MCF 10A (cell line): ENCODE measurements at regions of chr4 and their contacts with region 1.

Region 1: DNA sequence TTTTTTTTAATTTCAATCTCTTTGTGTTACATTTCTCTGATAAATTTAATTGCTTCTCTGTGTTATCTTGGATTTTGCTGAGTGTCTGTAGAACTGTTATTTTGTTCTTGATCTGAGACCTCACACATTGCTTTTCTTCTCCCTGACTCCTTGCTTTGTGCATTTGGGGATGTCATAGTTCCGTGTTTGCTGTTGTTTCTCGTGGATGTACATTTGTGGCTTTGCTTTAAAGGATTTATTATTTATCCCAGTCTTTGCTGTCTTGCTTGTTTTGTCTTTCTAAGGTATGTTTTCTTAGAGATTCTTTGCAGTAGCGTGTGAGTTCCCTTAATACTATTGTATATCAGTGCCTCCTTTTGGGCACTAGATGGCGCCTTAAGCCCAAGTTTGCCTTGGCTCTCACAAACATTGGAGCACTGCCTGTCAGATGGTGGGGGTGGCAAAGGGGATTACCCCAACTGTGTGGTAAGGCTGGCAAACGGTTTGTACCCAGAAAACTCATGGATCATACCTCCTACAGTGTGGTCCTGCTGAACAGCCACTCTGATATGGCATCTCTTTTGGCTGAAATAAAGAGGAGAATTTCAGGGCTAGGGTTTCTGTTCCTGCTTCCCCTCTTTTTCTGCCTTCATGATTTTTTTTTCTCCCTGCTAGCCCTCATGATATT is 96.4 kb downstream of the PGRMC2 start:
- DNase-seq: peak; percentile 81
- H3K4me3 Mint-ChIP-seq: no peak overlapping the region
- H3K27ac Mint-ChIP-seq: no peak overlapping the region
- H3K4me1 Mint-ChIP-seq: peaks cover 6% of the 10 kb centered on the region
- H3K27me3 Mint-ChIP-seq: no peaks in the 10 kb centered on the region
- CTCF ChIP-seq: peak; percentile 77

Region 2: GRCh38 chr4:128168701-128169100 is 22.5 kb before region 1 on chr4:
- CTCF ChIA-PET with region 1: interaction called, 11 read pairs
- POLR2A ChIA-PET with region 1: no interaction called
- intact Hi-C with region 1: no loop called
- DNase-seq: no peak
- H3K4me3 Mint-ChIP-seq: no peak overlapping the region
- H3K27ac Mint-ChIP-seq: no peak overlapping the region
- H3K4me1 Mint-ChIP-seq: no peaks in the 10 kb centered on the region
- H3K27me3 Mint-ChIP-seq: no peaks in the 10 kb centered on the region
- CTCF ChIP-seq: no peak

Region 3: GRCh38 chr4:128204901-128205300 is 13.7 kb after region 1 on chr4:
- CTCF ChIA-PET with region 1: interaction called, 11 read pairs
- POLR2A ChIA-PET with region 1: no interaction called
- intact Hi-C with region 1: no loop called
- DNase-seq: no peak
- H3K4me3 Mint-ChIP-seq: no peak overlapping the region
- H3K27ac Mint-ChIP-seq: no peak overlapping the region
- H3K4me1 Mint-ChIP-seq: no peaks in the 10 kb centered on the region
- H3K27me3 Mint-ChIP-seq: no peaks in the 10 kb centered on the region
- CTCF ChIP-seq: no peak

Region 4: DNA sequence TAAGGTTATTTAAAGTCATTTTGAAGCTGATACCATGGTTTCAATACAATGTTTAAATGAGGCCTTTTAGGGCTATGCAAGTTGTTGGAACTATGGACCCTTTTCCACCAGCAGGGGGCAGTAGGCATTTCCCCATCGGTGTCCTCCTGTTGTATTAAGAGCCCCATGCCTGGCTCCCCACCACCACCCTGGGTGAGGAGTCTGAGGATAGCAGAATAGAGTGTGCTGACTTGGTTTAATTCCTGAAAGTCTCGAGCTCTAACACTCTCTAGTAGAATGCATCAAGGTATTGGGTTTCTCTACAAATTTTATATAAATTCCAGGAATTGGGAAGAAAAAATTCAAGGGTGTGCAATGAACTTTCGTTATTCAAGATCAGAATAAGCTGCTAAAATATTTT is 383.5 kb after region 1 on chr4:
- CTCF ChIA-PET with region 1: interaction called, 4 read pairs
- POLR2A ChIA-PET with region 1: no interaction called
- intact Hi-C with region 1: loop called (anchors 2 kb)
- DNase-seq: peak; percentile 79
- H3K4me3 Mint-ChIP-seq: no peak overlapping the region
- H3K27ac Mint-ChIP-seq: no peak overlapping the region
- H3K4me1 Mint-ChIP-seq: peaks cover 32% of the 10 kb centered on the region
- H3K27me3 Mint-ChIP-seq: no peaks in the 10 kb centered on the region
- CTCF ChIP-seq: peak; percentile 61

Region 5: GRCh38 chr4:128863312-128864075 is 672.2 kb after region 1 on chr4:
- CTCF ChIA-PET with region 1: interaction called, 4 read pairs
- POLR2A ChIA-PET with region 1: interaction called, 4 read pairs
- intact Hi-C with region 1: loop called (anchors 1 kb)
- DNase-seq: peak; percentile 89
- H3K4me3 Mint-ChIP-seq: no peak overlapping the region
- H3K27ac Mint-ChIP-seq: peak overlapping the region; percentile 47
- H3K4me1 Mint-ChIP-seq: peaks cover 3% of the 10 kb centered on the region
- H3K27me3 Mint-ChIP-seq: no peaks in the 10 kb centered on the region
- CTCF ChIP-seq: peak; percentile 63

Region 6: DNA sequence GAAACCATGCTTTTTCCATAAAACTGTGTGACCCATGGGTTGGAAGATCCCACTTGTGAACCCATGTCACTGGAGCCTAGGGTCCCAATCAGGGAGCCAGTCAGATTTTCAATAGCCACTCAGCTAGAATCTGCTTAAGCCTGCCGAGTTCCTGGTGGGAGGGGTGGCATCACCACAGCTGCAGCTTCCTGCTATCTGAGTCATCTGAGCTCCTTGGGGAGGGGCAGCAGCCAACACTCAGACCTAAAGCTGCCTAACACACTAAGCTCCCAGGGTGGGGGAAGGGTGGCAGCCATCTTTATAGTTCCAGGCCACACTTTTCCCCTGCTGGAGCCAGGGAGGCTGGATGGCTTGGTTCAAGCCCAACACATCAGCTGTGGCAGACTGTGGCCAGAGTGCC is 1254.8 kb after region 1 on chr4:
- CTCF ChIA-PET with region 1: no interaction called
- POLR2A ChIA-PET with region 1: no interaction called
- intact Hi-C with region 1: no loop called
- DNase-seq: peak; percentile 49
- H3K4me3 Mint-ChIP-seq: no peak overlapping the region
- H3K27ac Mint-ChIP-seq: no peak overlapping the region
- H3K4me1 Mint-ChIP-seq: no peaks in the 10 kb centered on the region
- H3K27me3 Mint-ChIP-seq: no peaks in the 10 kb centered on the region
- CTCF ChIP-seq: no peak